ENCODE measurements at regions of chr11 and their contacts with region 1.

Region 1: DNA sequence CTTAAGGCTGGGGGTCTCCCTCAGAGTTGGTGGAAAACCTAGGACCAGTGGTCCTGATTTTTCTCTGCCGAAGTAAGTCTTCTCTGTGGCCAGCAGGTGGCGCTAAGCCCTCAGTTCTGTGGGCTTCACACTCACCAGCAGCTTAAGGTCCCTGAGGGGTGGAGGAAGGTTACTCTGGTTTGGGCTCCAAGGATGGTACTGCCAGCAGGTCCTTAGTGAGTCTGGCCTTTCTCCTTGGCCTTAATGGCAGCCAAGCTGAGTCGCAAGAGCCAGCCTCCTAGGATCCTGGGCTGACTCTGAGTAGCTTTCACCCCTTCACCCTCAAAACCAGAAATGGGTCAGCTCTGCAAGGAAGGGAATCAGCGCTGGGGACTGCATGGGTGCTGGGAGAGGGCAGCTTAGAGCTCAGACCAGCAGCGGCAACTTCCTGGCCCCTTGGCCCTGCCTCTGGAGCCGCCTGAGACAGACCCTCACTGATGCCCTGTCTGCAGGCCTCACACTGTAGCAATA is 4.4 kb downstream of the KCNJ11 start:
- DNase-seq: peak; percentile 73
- H3K4me3 ChIP-seq: no peak overlapping the region
- H3K27ac ChIP-seq: no peak overlapping the region
- H3K4me1 ChIP-seq: peaks cover 0 to 4% of the 10 kb centered on the region in 2 experiments; a peak in 1 of 4 replicates
- H3K27me3 ChIP-seq: no peaks in the 10 kb centered on the region
- CTCF ChIP-seq: peak; percentile 90
- EP300 ChIP-seq: no peak
- RAD21 ChIP-seq: peak; percentile 91

Region 2: DNA sequence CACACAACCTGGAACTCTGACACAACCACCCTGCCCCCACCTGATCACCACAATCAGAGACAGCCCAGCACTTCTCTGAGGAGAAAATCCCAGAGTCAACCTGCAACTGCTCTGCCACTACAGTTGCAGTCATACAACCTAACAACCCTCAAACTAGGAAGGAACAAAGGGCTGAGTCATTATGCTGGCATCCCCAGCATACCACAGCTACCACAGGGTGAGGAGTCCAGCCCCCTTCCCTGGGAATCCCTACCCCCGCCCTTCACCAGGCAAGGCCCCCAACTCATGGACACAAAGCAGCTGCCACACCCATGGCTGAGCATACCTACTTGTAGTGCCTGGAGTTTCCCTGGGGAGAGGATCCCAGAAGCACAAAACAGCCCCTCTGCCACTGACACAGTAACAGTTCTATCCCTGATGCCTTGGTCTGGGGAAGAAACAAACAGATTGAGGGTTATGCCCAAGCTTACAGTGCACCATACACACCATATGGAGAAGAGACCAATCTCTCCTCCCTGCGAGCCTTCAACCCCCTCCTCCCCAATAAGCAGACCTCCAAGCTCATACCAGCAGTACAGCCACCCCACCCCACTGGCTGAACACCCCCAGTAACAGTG is 714.1 kb before region 1 on chr11:
- CTCF ChIA-PET with region 1: no interaction called
- POLR2A ChIA-PET with region 1: no interaction called
- DNase-seq: no peak
- H3K4me3 ChIP-seq: no peak overlapping the region
- H3K27ac ChIP-seq: no peak overlapping the region
- H3K4me1 ChIP-seq: no peaks in the 10 kb centered on the region
- H3K27me3 ChIP-seq: no peaks in the 10 kb centered on the region
- CTCF ChIP-seq: no peak
- EP300 ChIP-seq: no peak
- RAD21 ChIP-seq: no peak

Region 3: DNA sequence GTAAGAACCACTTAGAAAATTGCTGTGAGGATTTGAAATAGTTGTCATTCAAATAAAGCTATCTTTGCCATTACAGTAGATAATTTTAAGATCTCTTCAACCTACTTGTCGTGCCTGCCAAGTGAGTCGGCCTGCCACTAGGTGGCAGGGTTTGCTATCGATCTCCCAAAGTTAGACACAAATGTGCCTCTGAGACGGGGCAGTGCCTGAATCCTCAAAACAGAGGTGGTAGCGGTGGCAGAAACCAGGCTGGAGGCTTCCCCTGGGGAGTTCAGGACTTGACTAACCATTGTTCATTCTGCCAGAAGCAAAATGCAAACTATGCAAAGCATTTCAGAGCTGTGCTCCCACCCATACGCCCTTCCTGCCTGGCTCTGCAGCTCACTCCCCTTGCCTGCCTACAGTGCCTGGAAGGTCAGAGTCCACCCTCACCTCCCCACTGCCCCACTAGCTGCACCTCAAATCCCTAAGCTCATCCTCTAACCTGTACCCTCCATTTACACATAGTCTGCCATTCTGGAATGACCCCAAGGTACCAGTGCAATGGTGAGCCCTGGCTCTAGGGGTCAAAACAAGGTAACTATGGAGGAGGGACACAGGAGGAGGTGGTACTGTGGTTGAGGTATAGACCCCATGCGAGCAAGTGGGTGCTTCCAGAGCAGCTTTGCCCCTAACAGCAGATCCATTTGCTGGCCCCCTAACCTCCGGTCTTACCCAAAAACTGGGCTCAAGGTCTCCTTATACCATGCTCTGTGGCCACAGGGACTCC is 563.5 kb before region 1 on chr11:
- CTCF ChIA-PET with region 1: no interaction called
- POLR2A ChIA-PET with region 1: no interaction called
- DNase-seq: peak; percentile 74
- H3K4me3 ChIP-seq: peak overlapping the region in 1 of 2 experiments; percentile 41; a peak in 1 of 4 replicates
- H3K27ac ChIP-seq: no peak overlapping the region
- H3K4me1 ChIP-seq: peaks cover 0 to 6% of the 10 kb centered on the region in 2 experiments; a peak in 2 of 4 replicates
- H3K27me3 ChIP-seq: no peaks in the 10 kb centered on the region
- CTCF ChIP-seq: peak; percentile 93
- EP300 ChIP-seq: no peak
- RAD21 ChIP-seq: peak; percentile 80

Region 4: GRCh38 chr11:17276236-17277023 is 107.6 kb before region 1 on chr11 and contains the start of gene NUCB2:
- CTCF ChIA-PET with region 1: interaction called, 11 read pairs
- POLR2A ChIA-PET with region 1: no interaction called
- DNase-seq: peak; percentile 96
- H3K4me3 ChIP-seq: peak within 1 kb of the TSS; percentile 71 to 95
- H3K27ac ChIP-seq: peak within 1 kb of the TSS; percentile 79
- H3K4me1 ChIP-seq: peaks cover 3% of the 10 kb centered on the region in 2 experiments; a peak in 1 of 4 replicates
- H3K27me3 ChIP-seq: no peaks in the 10 kb centered on the region
- CTCF ChIP-seq: no peak
- EP300 ChIP-seq: no peak
- RAD21 ChIP-seq: no peak
- polyA plus RNA-seq, gene NUCB2: 23.9 and 25.0 TPM in 2 replicates

Region 5: GRCh38 chr11:17366495-17366894 is 17.6 kb before region 1 on chr11:
- CTCF ChIA-PET with region 1: interaction called, 32 read pairs
- POLR2A ChIA-PET with region 1: no interaction called
- DNase-seq: no peak
- H3K4me3 ChIP-seq: no peak overlapping the region
- H3K27ac ChIP-seq: no peak overlapping the region
- H3K4me1 ChIP-seq: no peaks in the 10 kb centered on the region
- H3K27me3 ChIP-seq: no peaks in the 10 kb centered on the region
- CTCF ChIP-seq: no peak
- EP300 ChIP-seq: no peak
- RAD21 ChIP-seq: no peak

Region 6: GRCh38 chr11:17412488-17413180 is 28.6 kb after region 1 on chr11:
- CTCF ChIA-PET with region 1: interaction called, 13 read pairs
- POLR2A ChIA-PET with region 1: no interaction called
- DNase-seq: no peak
- H3K4me3 ChIP-seq: no peak overlapping the region
- H3K27ac ChIP-seq: no peak overlapping the region
- H3K4me1 ChIP-seq: no peaks in the 10 kb centered on the region; a peak in 1 of 4 replicates
- H3K27me3 ChIP-seq: no peaks in the 10 kb centered on the region
- CTCF ChIP-seq: no peak
- EP300 ChIP-seq: no peak
- RAD21 ChIP-seq: no peak

Region 7: DNA sequence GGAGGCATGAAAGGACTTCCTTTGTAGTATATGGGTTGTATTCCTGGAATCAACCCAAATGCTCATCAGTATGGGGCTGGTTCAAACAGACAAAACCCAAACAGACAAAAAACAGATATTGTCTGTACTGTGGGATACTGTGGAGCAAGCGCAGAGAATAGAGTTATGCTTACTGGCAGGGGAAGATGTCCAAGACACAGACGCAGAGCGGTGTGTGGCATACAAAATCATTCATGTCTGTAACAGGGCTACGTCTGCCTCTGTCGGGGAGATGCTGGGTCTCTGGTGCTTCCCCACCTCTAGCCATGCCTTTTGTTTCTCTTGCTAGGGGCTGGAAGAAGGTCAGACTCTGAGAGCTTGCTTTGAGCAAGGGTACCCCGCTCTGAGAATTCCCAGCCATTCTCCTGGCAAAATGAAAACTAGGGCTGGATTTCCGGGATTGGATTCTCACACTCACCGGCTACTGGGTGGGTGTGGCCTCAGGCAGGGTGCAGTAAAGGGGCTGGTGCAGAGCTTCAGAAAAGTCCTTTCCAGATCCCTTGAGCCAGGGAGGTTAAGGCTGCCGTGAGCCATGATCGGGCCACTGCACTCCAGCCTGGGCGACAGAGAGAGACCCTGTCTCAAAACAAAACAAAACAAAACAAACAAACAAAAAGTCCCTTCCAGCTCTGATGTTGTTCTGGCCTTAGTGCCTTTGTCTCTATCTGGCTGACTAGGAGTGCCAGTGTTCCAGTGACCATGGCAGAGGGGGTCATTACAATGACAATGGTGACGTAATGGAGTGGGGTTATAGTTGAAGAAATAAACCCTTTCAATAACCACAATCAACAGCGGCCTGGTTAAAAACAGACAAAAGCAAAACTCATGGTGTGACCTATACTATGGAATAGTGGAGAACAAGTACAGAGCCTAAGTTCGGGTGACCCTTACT is 95.5 kb after region 1 on chr11:
- CTCF ChIA-PET with region 1: interaction called, 14 read pairs
- POLR2A ChIA-PET with region 1: no interaction called
- DNase-seq: peak; percentile 85
- H3K4me3 ChIP-seq: peak overlapping the region in 1 of 2 experiments; percentile 25; a peak in 1 of 4 replicates
- H3K27ac ChIP-seq: no peak overlapping the region; a peak in 1 of 4 replicates
- H3K4me1 ChIP-seq: peaks cover 0 to 14% of the 10 kb centered on the region in 2 experiments; a peak in 1 of 4 replicates
- H3K27me3 ChIP-seq: peaks cover 28% of the 10 kb centered on the region
- CTCF ChIP-seq: no peak
- EP300 ChIP-seq: no peak
- RAD21 ChIP-seq: 0 out of 2 replicates have a peak, but pooled peaks have one; percentile 18

Region 8: DNA sequence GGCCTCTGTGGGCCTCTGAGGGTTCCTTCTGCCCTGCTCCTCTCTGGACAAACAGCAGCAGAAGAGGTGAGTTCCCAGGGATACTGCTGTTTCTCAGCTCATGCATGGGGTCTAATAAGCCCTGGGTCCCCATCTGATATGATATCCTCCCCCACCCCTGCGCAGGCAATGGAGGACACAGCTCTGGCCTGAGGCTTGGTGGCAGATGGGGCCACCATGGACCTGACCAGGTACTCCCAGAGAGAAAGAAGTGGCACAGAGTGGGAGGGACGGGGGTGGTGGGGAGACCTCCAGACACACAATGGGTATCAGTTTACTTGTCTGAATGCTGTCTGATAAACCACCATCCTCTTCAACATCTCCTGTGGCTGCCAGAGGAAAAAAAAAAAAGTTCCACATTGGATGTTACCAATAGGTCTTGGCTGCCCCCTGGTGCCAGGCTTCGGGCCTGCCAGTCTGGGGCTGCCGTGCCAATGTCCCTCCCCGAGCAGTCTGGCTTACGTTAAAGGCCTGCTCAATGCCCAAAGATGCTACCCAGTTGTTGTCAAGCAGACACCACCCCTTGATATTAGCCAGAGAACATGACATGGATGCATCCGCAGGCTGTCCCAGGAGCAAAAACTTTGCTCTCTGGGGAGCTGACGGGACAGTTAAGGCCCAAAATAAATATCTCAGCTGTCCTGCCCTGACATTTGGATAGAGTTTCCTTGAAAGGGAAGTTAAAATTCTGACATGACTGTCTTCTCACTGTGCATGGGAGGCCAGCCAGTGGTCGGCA is 120.5 kb after region 1 on chr11:
- CTCF ChIA-PET with region 1: interaction called, 1,101 read pairs
- POLR2A ChIA-PET with region 1: interaction called, 3 read pairs
- DNase-seq: peak; percentile 88
- H3K4me3 ChIP-seq: no peak overlapping the region; a peak in 1 of 4 replicates
- H3K27ac ChIP-seq: no peak overlapping the region
- H3K4me1 ChIP-seq: peaks cover 0 to 4% of the 10 kb centered on the region in 2 experiments; a peak in 1 of 4 replicates
- H3K27me3 ChIP-seq: no peaks in the 10 kb centered on the region
- CTCF ChIP-seq: peak; percentile 87
- EP300 ChIP-seq: no peak
- RAD21 ChIP-seq: peak; percentile 96

Region 9: DNA sequence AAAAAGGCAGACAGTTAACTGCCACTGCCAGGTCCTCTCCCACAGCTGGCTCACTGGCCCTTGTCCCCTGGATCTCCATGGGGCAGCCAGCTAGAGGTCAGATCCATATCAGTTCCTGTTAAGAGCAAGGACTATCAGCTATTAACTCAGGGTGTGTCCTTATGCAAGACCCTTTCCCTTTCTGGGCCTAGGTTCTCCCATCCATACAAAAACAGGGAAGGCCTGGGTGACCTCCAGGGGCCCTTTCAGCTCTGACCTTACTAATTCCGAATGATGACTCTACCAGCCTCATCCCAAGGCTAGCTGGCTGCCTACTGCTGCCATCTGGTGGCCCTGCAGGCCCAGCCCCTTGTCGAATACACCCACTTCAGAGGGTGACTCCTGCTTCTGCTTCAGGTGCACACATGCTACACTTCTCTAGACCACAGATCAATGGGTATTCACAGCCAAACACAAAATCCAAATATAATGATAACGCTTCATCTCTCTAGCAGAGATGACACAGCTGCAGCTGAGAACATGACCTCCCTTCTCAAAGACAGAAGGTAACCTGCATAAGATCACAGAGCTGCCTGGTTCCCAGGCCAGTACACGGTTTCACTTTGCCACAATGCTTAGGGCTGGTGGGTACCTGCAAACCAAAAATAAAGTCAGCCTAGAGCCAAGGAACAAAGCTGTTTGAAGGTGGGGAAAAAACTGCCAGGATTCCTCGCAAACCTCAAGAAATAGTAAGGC is 594.7 kb after region 1 on chr11:
- CTCF ChIA-PET with region 1: interaction called, 11 read pairs
- POLR2A ChIA-PET with region 1: no interaction called
- DNase-seq: peak; percentile 61
- H3K4me3 ChIP-seq: no peak overlapping the region; a peak in 1 of 4 replicates
- H3K27ac ChIP-seq: no peak overlapping the region
- H3K4me1 ChIP-seq: peaks cover 0 to 5% of the 10 kb centered on the region in 2 experiments; a peak in 1 of 4 replicates
- H3K27me3 ChIP-seq: no peaks in the 10 kb centered on the region
- CTCF ChIP-seq: peak; percentile 85
- EP300 ChIP-seq: no peak
- RAD21 ChIP-seq: peak; percentile 79

Measured in SK-N-SH (cell line).